Thyroid gland (tissue), 4 donors: ENCODE measurements at regions of chr18 and their contacts with region 1.

Region 1: DNA sequence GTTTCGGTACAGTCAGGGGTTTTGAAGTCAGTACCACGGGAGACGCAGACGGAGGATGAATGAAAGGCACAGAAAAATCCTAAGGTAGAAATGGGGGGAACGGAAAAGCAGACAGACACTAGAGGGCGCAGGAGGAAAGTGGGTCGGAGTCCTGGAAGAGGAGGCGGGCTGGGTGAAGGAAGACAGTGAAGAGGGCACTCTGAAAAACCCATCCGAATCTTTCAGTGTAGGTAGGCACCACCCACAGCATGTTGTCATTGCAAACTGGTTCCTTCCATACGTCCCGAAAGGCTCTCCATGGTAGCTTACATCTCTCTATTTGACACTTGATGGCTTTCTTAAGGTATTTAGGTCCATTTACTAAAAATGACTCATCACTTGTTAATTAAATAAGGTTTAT is 18.5 kb upstream of the ZNF236 start:
- DNase-seq: peak; percentile 53 to 60
- H3K4me3 ChIP-seq: no peak overlapping the region
- H3K27ac ChIP-seq: no peak overlapping the region
- H3K4me1 ChIP-seq: peaks cover 0 to 16% of the 10 kb centered on the region in 2 donors
- H3K27me3 ChIP-seq: no peaks in the 10 kb centered on the region
- CTCF ChIP-seq: peak; percentile 37 to 75 (median 52)
- POLR2A ChIP-seq: no peak

Region 2: GRCh38 chr18:76881744-76882143 is 77.9 kb after region 1 on chr18:
- intact Hi-C with region 1: loop called (anchors 10 kb)
- DNase-seq: peak; percentile 43 to 49
- H3K4me3 ChIP-seq: no peak overlapping the region
- H3K27ac ChIP-seq: no peak overlapping the region
- H3K4me1 ChIP-seq: no peaks in the 10 kb centered on the region
- H3K27me3 ChIP-seq: no peaks in the 10 kb centered on the region
- CTCF ChIP-seq: no peak
- POLR2A ChIP-seq: no peak

Region 3: DNA sequence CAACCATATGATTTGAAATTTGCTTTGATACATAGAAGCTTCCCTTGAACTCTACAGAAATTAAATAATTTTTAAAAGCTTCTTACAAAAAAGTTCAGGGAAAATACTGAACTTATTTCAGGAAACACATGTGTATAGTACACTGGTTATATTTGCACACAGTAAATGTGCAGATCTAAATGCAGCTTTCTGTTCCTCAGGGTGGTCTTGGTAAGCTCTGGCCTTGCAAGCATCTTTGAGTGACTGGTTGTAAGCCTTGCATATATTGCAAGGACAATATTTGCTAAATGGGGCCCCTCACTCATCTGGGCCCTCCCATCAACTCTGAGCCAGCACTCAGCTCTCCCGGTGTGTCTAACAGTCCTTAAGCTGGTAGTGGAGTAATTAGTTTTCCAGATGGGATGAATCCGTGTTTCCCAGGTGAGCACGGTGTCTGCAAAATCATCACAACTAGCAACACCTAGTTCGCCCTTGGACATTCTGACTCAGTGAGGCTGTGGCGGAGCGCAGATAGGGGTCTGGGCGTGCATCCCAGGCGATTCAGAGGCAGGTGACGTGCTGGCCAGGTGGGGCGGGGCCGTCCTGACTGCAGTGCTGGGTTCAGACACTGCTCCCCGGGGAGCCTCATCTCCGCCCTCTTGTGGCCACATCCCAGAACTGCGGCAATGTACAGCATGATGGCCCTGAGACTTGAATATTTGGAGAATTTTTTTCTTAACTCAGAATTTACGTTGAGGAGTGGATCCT is 179.2 kb after region 1 on chr18:
- intact Hi-C with region 1: loop called (anchors 10 kb)
- DNase-seq: peak; percentile 89 to 92
- H3K4me3 ChIP-seq: no peak overlapping the region
- H3K27ac ChIP-seq: no peak overlapping the region
- H3K4me1 ChIP-seq: peaks cover 34 to 35% of the 10 kb centered on the region in 2 donors
- H3K27me3 ChIP-seq: no peaks in the 10 kb centered on the region
- CTCF ChIP-seq: peak; percentile 84 to 95 (median 86)
- POLR2A ChIP-seq: no peak